CD14-positive monocyte (primary cell): ENCODE measurements at regions of chr19 and their contacts with region 1.

Region 1: DNA sequence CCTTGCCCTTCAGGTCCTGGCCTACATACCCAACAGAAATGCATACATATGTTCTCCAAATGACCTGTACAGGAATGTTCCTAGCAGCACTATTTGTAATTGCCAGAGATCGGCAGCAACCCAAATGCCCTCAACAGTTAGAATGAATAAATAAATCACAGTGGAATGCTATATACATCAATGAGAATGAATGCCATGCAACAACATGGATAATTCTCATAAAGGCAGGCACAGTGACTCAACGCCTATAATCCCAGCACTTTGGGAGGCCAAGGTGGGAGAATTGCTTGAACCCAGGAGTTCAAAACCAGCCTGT is 18.6 kb downstream of the TEX101 start:
- DNase-seq: no peak
- H3K4me3 ChIP-seq: no peak overlapping the region
- H3K4me3 Mint-ChIP-seq: no peak overlapping the region
- H3K27ac ChIP-seq: no peak overlapping the region
- H3K27ac Mint-ChIP-seq: peak overlapping the region in 1 of 7 donors; percentile 38
- H3K4me1 ChIP-seq: peaks cover 3 to 5% of the 10 kb centered on the region in 2 donors
- H3K4me1 Mint-ChIP-seq: peaks cover 12% of the 10 kb centered on the region
- H3K27me3 ChIP-seq: no peaks in the 10 kb centered on the region
- H3K27me3 Mint-ChIP-seq: peaks cover 2 to 12% (median 8%) of the 10 kb centered on the region in 3 donors
- CTCF ChIP-seq: no peak

Region 2: GRCh38 chr19:43406297-43406696 is 27.0 kb before region 1 on chr19:
- intact Hi-C with region 1: no loop called
- DNase-seq: no peak
- H3K4me3 ChIP-seq: no peak overlapping the region
- H3K4me3 Mint-ChIP-seq: no peak overlapping the region
- H3K27ac ChIP-seq: no peak overlapping the region
- H3K27ac Mint-ChIP-seq: no peak overlapping the region
- H3K4me1 ChIP-seq: peaks cover 11 to 15% of the 10 kb centered on the region in 2 donors
- H3K4me1 Mint-ChIP-seq: peaks cover 10% of the 10 kb centered on the region
- H3K27me3 ChIP-seq: no peaks in the 10 kb centered on the region
- H3K27me3 Mint-ChIP-seq: peaks cover 3 to 5% (median 3%) of the 10 kb centered on the region in 3 donors
- CTCF ChIP-seq: no peak

Region 3: DNA sequence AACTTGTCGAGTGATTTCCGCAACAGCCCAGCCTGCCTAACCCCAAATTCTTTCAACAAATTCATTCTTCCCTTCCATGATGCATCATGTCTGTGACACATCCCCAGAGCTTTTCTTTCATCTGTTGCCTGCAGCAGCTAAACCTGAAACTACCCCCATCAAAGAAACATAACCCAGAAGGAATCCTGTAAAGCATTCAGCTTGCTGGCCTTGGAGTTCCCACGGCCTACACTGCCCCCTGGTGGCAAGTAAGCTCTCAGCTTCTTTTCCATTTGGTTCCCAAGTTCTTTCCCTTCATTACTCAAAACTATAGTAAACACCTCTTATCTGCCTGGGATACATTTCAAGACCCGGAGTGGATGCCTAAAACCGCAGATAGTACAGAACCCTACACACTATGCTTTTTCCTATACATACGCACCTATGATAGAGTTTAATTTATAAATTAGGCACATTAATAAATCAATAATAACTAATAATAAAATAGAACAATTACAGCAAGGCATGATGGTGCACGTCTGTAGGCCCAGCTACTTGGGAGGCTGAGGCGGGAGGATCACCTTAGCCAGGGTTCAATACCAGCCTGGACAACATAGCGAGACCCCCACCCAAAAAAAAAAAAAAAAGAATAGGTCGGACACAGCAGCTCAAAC is 86.2 kb after region 1 on chr19:
- intact Hi-C with region 1: loop called in 1 of 2 experiments (anchors 2 kb)
- DNase-seq: peak; percentile 68 to 78 (median 73)
- H3K4me3 ChIP-seq: no peak overlapping the region
- H3K4me3 Mint-ChIP-seq: no peak overlapping the region
- H3K27ac ChIP-seq: no peak overlapping the region
- H3K27ac Mint-ChIP-seq: peak overlapping the region in 4 of 7 donors; percentile 10 to 86 (median 68)
- H3K4me1 ChIP-seq: peaks cover 28 to 29% of the 10 kb centered on the region in 2 donors
- H3K4me1 Mint-ChIP-seq: peaks cover 33% of the 10 kb centered on the region
- H3K27me3 ChIP-seq: no peaks in the 10 kb centered on the region
- H3K27me3 Mint-ChIP-seq: no peaks in the 10 kb centered on the region
- CTCF ChIP-seq: peak; percentile 87